ENCODE measurements at regions of chr3 and their contacts with region 1.

Region 1: DNA sequence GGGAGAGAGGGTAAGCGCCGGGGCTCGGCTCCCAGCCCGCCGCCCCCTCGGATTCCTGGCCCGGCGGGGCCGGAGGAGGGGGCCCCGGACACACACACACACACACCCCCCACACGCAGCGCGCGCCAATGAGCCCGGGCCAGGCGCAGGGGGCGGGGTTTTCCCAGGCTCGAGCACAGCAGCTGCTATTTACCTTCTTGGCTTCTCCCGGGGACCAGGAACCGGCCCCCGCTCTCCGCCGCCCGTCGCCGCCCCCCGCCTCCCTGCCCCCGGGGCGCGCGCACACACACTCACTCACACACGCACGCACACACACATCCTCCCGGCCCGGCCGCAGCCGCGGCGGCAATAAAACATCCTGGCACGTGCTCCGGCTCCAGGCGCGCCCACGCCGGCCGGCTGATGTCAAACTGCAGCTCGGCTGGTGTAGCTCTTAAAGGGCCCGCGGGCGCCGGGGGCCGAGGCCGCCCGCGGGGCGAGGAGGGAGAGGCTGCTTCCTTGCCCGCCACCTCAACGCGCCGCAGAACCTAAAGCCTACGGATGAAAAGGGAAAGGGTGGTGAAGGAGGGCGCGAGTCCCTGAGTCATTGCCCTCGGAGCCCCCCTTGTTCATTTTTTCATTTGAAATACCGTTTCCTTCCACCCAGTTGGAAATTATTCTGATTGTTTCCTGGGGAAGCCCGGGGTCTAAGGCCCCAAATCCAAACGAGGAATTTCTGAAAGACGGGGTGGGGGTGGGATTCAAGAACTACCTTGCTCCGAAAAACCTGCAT is 1.0 kb upstream of the HES1 start:
- DNase-seq: peak; percentile 68 to 97
- ATAC-seq: peak; percentile 60 to 71
- H3K4me3 ChIP-seq: peak overlapping the region; percentile 51
- H3K27ac ChIP-seq: peak overlapping the region; percentile 99
- H3K4me1 ChIP-seq: peaks cover 54% of the 10 kb centered on the region
- CTCF ChIP-seq: no peak
- EP300 ChIP-seq: peak; percentile 69 to 86; a peak in 3 of 5 replicates
- POLR2A ChIP-seq: no peak
- RAD21 ChIP-seq: peak; percentile 7 to 59; a peak in 4 of 5 replicates

Region 2: GRCh38 chr3:193665370-193665989 is 469.5 kb before region 1 on chr3:
- CTCF ChIA-PET with region 1: interaction called, 13 read pairs
- POLR2A ChIA-PET with region 1: no interaction called
- DNase-seq: peak in 1 of 2 experiments; percentile 21
- ATAC-seq: no peak
- H3K4me3 ChIP-seq: no peak overlapping the region
- H3K27ac ChIP-seq: no peak overlapping the region
- H3K4me1 ChIP-seq: no peaks in the 10 kb centered on the region
- CTCF ChIP-seq: peak; percentile 49
- EP300 ChIP-seq: no peak
- POLR2A ChIP-seq: no peak
- RAD21 ChIP-seq: peak; percentile 55 to 64

Region 3: GRCh38 chr3:193788189-193788991 is 346.6 kb before region 1 on chr3:
- CTCF ChIA-PET with region 1: interaction called, 26 read pairs
- POLR2A ChIA-PET with region 1: interaction called, 6 read pairs
- DNase-seq: peak; percentile 63 to 74
- ATAC-seq: peak; percentile 88 to 97
- H3K4me3 ChIP-seq: no peak overlapping the region
- H3K27ac ChIP-seq: peak overlapping the region; percentile 53 to 66; a peak in 4 of 6 replicates
- H3K4me1 ChIP-seq: peaks cover 18% of the 10 kb centered on the region
- CTCF ChIP-seq: peak; percentile 61
- EP300 ChIP-seq: no peak
- POLR2A ChIP-seq: no peak
- RAD21 ChIP-seq: peak; percentile 87

Region 4: GRCh38 chr3:194070634-194071409 is 64.1 kb before region 1 on chr3:
- CTCF ChIA-PET with region 1: interaction called, 6 read pairs
- POLR2A ChIA-PET with region 1: interaction called, 19 read pairs
- DNase-seq: peak; percentile 58 to 84
- ATAC-seq: peak; percentile 78 to 80
- H3K4me3 ChIP-seq: peak overlapping the region; percentile 55
- H3K27ac ChIP-seq: peak overlapping the region; percentile 97 to 98
- H3K4me1 ChIP-seq: peaks cover 30% of the 10 kb centered on the region
- CTCF ChIP-seq: no peak
- EP300 ChIP-seq: peak; percentile 32 to 37; a peak in 1 of 5 replicates
- POLR2A ChIP-seq: no peak
- RAD21 ChIP-seq: no peak; a peak in 1 of 5 replicates

Region 5: GRCh38 chr3:194112120-194113106 is 22.5 kb before region 1 on chr3:
- CTCF ChIA-PET with region 1: interaction called, 3 read pairs
- POLR2A ChIA-PET with region 1: interaction called, 11 read pairs
- DNase-seq: peak; percentile 81 to 97
- ATAC-seq: peak; percentile 93 to 98
- H3K4me3 ChIP-seq: no peak overlapping the region
- H3K27ac ChIP-seq: peak overlapping the region; percentile 90 to 92
- H3K4me1 ChIP-seq: peaks cover 41% of the 10 kb centered on the region
- CTCF ChIP-seq: no peak
- EP300 ChIP-seq: peak; percentile 75 to 79; a peak in 3 of 5 replicates
- POLR2A ChIP-seq: no peak
- RAD21 ChIP-seq: no peak; a peak in 1 of 5 replicates

Measured in A549 (cell line).